Colonic mucosa (tissue), 4 donors: ENCODE measurements at regions of chr7 and their contacts with region 1.

Region 1: GRCh38 chr7:123367484-123368122 is 166.8 kb downstream of the IQUB start:
- DNase-seq: no peak
- H3K4me3 ChIP-seq: no peak overlapping the region
- H3K27ac ChIP-seq: no peak overlapping the region
- H3K4me1 ChIP-seq: no peaks in the 10 kb centered on the region
- H3K27me3 ChIP-seq: no peaks in the 10 kb centered on the region
- CTCF ChIP-seq: peak; percentile 59

Region 2: DNA sequence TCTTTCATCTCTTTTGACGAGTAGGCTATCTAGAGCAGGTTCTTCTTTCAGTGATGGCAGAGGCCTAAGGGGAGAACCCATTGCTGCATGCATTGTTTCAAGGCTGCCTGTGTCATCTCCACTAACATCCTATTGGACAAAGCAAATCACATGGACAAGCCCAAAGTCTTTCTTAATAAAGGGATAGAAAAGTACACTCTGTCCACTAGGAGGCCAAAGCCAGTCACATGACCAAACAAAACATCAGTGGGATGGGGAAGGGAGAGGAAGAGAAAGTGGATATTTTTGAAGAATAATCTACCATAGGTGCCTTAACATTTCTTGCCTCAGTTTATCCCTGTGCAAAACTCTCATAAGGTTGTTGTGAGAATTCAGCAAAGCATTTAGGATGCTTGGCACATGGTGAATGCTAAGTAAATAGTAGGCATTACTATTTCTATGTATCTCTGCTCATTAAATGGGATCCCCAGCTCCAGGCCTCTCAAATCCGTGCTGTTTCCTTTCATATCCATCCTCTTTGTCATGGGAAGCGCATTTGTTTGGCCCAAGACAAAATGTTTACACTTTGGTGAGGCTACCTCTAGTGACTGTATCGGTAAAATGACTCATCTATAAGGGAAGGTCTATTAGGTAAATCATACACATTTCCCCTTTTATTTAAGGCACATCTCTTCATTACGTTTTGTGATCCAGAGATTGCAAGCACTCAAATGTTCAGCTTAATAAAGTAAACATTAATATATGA is 464.7 kb before region 1 on chr7:
- intact Hi-C with region 1: no loop called
- DNase-seq: no peak
- H3K4me3 ChIP-seq: no peak overlapping the region
- H3K27ac ChIP-seq: no peak overlapping the region
- H3K4me1 ChIP-seq: no peaks in the 10 kb centered on the region
- H3K27me3 ChIP-seq: no peaks in the 10 kb centered on the region
- CTCF ChIP-seq: no peak

Region 3: DNA sequence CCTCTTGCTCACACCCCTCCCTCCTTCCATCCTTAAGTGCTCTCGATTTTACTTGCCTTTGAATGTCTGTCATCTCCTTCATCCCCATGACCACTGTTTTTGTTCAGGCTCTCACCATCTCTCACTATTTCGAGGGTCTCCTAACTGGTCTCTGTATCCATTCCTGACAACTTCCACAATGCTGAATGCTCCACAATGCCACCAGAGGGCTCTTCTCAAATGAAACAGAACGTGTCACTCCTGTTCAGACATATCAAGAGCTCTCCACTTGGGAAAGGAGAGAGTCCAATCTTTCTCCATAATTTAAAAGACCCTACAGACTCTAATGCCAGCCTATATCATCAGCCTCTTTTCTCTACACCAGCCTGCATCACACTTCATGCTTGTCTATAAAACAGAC is 158.8 kb before region 1 on chr7:
- intact Hi-C with region 1: loop called (anchors 5 kb)
- DNase-seq: no peak
- H3K4me3 ChIP-seq: no peak overlapping the region
- H3K27ac ChIP-seq: no peak overlapping the region
- H3K4me1 ChIP-seq: no peaks in the 10 kb centered on the region
- H3K27me3 ChIP-seq: no peaks in the 10 kb centered on the region
- CTCF ChIP-seq: peak; percentile 19

Region 4: DNA sequence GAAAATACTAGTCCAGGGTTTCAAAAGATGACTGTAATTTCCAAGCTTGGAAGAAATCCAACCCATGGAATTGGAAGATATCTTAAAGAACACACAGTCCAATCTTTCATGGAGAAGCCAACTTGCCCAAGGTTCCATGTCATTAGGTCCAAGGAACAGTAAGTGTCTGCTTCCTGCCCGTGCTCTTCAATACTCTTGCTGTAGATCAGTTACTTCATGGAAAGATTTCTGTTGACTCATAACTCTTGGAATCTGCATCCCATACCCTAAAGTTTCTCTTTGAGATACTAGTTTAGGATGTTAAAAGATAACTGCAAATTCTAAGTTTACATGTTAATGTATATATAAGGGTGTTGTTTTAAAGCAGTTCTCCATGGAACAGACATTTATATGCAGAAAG is 39.9 kb before region 1 on chr7:
- intact Hi-C with region 1: no loop called
- DNase-seq: no peak
- H3K4me3 ChIP-seq: no peak overlapping the region
- H3K27ac ChIP-seq: no peak overlapping the region
- H3K4me1 ChIP-seq: no peaks in the 10 kb centered on the region
- H3K27me3 ChIP-seq: no peaks in the 10 kb centered on the region
- CTCF ChIP-seq: no peak

Region 5: GRCh38 chr7:123499211-123499970 is 131.8 kb after region 1 on chr7:
- intact Hi-C with region 1: no loop called
- DNase-seq: no peak
- H3K4me3 ChIP-seq: no peak overlapping the region
- H3K27ac ChIP-seq: no peak overlapping the region
- H3K4me1 ChIP-seq: no peaks in the 10 kb centered on the region
- H3K27me3 ChIP-seq: no peaks in the 10 kb centered on the region
- CTCF ChIP-seq: no peak

Region 6: GRCh38 chr7:123643495-123644441 is 276.2 kb after region 1 on chr7:
- intact Hi-C with region 1: no loop called
- DNase-seq: no peak
- H3K4me3 ChIP-seq: no peak overlapping the region
- H3K27ac ChIP-seq: no peak overlapping the region
- H3K4me1 ChIP-seq: no peaks in the 10 kb centered on the region
- H3K27me3 ChIP-seq: peaks cover 3% of the 10 kb centered on the region
- CTCF ChIP-seq: no peak